ENCODE measurements at regions of chr7 and their contacts with region 1.

Region 1: GRCh38 chr7:141654551-141654950 is 47.4 kb downstream of the DENND11 start:
- DNase-seq: no peak
- ATAC-seq: peak; percentile 67
- H3K4me3 Mint-ChIP-seq: no peak overlapping the region
- H3K27ac Mint-ChIP-seq: peak overlapping the region; percentile 72
- H3K4me1 Mint-ChIP-seq: peaks cover 15% of the 10 kb centered on the region
- H3K27me3 Mint-ChIP-seq: no peaks in the 10 kb centered on the region
- CTCF ChIP-seq: no peak

Region 2: DNA sequence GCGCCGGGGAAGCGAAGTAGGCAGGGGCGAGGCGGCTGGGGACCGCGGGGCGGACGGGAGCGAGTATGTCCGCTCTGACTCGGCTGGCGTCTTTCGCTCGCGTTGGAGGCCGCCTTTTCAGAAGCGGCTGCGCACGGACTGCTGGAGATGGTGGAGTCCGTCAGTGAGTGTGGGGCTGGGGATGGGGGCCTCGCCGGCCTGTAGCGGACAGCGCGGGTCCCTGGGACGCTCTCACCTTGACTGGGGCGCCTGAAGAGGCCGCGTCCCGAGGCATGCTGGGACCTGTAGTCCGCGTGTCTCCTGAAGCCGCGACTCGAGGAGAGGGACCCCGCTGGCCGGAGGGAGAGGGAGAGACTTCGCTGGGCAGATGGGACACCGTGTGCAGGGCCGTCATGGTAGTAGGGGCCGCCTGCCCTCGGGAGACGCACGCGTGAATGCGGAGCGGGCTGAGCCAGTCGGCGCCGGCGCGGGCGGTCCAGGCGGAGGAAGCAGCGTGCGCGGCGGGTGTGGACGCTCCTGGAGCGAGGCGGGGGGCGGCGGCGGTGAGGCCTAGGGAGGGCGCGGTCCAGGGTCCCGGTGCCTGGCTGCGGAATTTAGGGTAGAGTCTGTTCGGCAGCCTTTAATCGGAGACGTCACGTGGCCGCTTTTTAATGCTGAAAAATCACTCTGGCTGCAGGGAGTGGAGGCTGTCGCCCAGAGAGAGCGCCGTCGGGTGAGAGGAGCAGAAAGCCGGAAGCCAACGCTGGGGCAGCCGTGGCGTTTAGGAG is 957.7 kb before region 1 on chr7 and contains the start of gene NDUFB2:
- CTCF ChIA-PET with region 1: no interaction called
- POLR2A ChIA-PET with region 1: no interaction called
- intact Hi-C with region 1: loop called (anchors 5 kb)
- DNase-seq: peak; percentile 90
- ATAC-seq: peak; percentile 86
- H3K4me3 Mint-ChIP-seq: peak within 1 kb of the TSS; percentile 94
- H3K27ac Mint-ChIP-seq: peak within 1 kb of the TSS; percentile 98
- H3K4me1 Mint-ChIP-seq: peaks cover 34% of the 10 kb centered on the region
- H3K27me3 Mint-ChIP-seq: no peaks in the 10 kb centered on the region
- CTCF ChIP-seq: no peak
- total RNA-seq, gene NDUFB2: 140 and 168 TPM in 2 replicates

Region 3: DNA sequence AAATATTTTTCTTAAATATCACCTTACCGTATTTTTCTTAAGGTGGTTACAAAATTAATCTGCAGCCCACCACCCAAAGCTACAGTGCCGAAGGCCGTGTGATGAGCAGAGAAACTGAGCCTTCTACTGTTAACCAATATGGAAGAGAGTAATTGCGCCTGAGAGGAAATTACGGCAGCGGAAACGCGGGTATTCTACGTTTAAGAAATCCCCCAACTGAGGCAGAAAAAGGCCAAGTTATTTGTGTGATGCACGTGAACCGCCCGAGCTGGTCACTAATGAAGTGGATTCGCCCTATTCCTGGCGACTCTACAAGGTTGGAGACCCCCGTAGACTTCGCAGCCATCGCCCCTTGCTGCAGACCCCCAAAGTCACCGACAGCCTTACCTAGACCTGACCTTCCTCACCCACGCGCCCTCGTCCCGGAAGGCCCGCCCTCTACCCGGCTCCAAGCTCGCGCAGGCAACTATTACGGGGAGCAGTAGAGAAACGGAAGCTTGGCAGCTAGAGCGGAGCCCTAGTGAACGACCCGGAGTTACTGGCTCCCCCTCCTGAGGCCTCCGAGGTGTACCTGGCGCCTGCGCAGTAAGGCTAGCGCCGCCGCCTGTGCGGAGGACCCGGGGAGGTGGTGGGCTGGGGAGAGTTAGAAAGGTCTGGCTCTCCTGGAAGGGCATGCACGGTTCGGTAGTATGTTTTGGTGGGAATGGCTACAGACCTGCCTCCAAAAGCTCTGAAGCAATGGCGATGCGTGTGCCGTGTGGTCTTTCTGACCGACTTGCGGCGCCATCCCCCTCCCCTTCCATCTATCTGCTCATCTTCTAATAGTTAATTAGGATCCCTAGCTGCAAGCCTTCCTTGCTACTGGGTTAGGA is 639.8 kb before region 1 on chr7 and contains the start of gene MRPS33:
- CTCF ChIA-PET with region 1: interaction called, 3 read pairs
- POLR2A ChIA-PET with region 1: interaction called, 7 read pairs
- intact Hi-C with region 1: loop called (anchors 1 kb)
- DNase-seq: peak; percentile 86
- ATAC-seq: peak; percentile 98
- H3K4me3 Mint-ChIP-seq: peak within 1 kb of the TSS; percentile 99
- H3K27ac Mint-ChIP-seq: peak within 1 kb of the TSS; percentile 100
- H3K4me1 Mint-ChIP-seq: peaks cover 20% of the 10 kb centered on the region
- H3K27me3 Mint-ChIP-seq: peaks cover 13% of the 10 kb centered on the region
- CTCF ChIP-seq: no peak
- total RNA-seq, gene MRPS33: 37.5 and 46.4 TPM in 2 replicates

Region 4: DNA sequence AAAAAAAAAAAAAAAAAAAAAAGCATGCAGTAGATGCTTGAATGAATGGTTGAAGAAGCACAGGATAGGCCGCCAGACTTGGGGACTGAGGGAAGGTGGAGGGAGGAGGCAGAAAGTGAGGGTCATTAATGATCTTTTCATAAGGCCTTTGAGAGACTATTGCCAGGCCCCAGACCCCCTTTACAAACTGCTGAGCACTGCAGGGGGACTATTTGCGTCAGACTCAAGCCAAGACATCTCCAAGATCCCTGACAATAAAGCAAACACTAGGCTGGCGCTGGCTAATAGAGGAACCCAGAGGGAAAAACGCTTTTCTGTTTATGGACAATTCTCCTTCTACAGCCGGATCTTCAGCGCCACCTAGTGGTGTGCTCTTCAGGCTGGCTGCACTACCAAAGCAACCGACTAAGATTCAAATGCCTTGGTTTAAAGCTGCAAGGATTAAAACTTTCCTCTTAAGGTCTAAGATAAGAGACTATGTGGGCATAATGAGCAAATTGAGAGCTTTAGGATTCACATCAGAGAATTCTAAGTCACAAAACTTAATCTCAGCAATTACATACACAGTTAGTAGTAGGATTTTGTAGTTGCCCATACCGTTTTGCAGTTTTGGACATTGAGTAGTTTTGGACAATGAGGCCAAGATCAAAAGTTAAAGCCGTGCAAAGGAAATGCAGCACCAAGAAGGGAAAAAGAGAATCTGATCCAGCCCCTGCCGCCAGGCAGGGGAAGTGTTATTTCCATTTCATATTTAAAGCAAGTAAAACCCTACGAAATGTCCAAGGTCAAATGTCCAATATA is 121.2 kb before region 1 on chr7:
- CTCF ChIA-PET with region 1: interaction called, 6 read pairs
- POLR2A ChIA-PET with region 1: no interaction called
- intact Hi-C with region 1: loop called (anchors 1 kb)
- DNase-seq: peak; percentile 29
- ATAC-seq: peak; percentile 45
- H3K4me3 Mint-ChIP-seq: no peak overlapping the region
- H3K27ac Mint-ChIP-seq: no peak overlapping the region
- H3K4me1 Mint-ChIP-seq: no peaks in the 10 kb centered on the region
- H3K27me3 Mint-ChIP-seq: peaks cover 23% of the 10 kb centered on the region
- CTCF ChIP-seq: peak; percentile 54

Region 5: DNA sequence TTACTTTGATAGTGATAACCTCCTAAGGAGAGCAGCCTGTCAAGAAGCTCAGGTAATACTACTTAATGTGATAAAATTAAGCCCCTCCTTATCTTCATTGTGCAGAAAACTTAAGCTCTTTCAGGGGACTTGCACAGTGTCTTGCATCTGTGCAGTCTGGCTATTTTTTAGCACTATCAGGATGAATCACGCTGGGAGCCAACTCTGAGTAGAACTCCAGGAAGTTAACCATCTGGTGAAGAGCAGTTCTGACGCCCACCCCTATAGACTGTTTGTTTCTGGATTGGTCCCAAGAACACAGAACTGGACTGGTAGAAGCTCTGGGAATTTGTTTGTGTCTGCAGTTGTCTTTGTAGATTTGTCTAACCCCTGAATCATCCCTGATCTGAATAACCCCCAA is 61.4 kb before region 1 on chr7:
- CTCF ChIA-PET with region 1: no interaction called
- POLR2A ChIA-PET with region 1: no interaction called
- intact Hi-C with region 1: no loop called
- DNase-seq: no peak
- ATAC-seq: no peak
- H3K4me3 Mint-ChIP-seq: no peak overlapping the region
- H3K27ac Mint-ChIP-seq: no peak overlapping the region
- H3K4me1 Mint-ChIP-seq: no peaks in the 10 kb centered on the region
- H3K27me3 Mint-ChIP-seq: no peaks in the 10 kb centered on the region
- CTCF ChIP-seq: no peak

Region 6: DNA sequence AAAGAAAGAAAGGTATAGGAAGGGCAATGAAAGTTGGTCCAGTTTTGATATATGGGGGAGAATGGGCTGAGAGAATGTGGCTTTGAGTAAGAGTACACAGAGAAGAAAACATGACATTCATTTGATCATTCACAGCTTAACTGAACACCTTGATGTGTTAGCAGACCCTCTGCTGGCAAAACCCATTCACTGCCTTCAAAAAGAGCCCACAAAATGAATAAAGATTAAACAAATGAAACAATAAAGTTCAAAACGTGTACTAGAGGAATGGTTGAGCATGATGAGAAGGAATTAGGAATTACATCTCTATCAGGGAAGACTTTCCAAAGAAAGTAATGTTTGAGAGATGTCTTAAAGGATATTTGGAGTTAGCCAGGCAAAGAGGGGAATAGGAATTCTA is 55.8 kb after region 1 on chr7:
- CTCF ChIA-PET with region 1: interaction called, 23 read pairs
- POLR2A ChIA-PET with region 1: no interaction called
- intact Hi-C with region 1: loop called (anchors 2 kb)
- DNase-seq: no peak
- ATAC-seq: no peak
- H3K4me3 Mint-ChIP-seq: no peak overlapping the region
- H3K27ac Mint-ChIP-seq: no peak overlapping the region
- H3K4me1 Mint-ChIP-seq: no peaks in the 10 kb centered on the region
- H3K27me3 Mint-ChIP-seq: no peaks in the 10 kb centered on the region
- CTCF ChIP-seq: no peak

Region 7: DNA sequence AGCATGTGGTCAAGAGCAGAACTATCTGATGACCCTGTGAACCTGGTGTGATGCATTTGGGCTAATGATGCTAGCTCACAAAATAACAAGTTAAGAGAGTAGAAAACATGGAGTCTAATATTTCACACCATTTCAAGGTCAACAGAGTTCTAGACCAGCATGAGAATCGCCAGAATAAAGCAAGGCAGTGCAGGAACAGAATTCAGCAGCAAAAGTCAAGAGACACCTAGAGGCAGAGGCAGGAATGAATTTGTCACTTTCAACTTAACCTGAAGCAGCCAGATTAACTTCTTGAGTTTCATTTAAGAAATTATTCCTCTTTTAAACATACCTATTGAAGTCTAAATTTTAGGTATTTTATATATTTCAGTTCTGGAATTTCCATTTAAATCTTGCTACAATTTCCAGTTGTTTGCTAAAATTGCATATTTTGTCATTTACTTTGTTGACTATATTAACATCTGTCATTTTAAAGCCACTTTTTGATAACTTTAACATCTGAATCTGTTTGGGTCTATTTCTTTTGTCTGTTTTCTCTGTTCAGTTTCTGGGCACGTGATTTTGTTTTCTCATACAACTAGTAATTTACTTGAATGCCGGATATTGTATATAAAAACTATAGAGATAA is 647.5 kb after region 1 on chr7:
- CTCF ChIA-PET with region 1: no interaction called
- POLR2A ChIA-PET with region 1: no interaction called
- intact Hi-C with region 1: loop called (anchors 5 kb)
- DNase-seq: no peak
- ATAC-seq: no peak
- H3K4me3 Mint-ChIP-seq: no peak overlapping the region
- H3K27ac Mint-ChIP-seq: no peak overlapping the region
- H3K4me1 Mint-ChIP-seq: no peaks in the 10 kb centered on the region
- H3K27me3 Mint-ChIP-seq: peaks cover 5% of the 10 kb centered on the region
- CTCF ChIP-seq: no peak